Activated B cell treated with CpG ODN at 0.5 μM for 24 hours (primary cell): ENCODE measurements at regions of chr5 and their contacts with region 1.

Region 1: DNA sequence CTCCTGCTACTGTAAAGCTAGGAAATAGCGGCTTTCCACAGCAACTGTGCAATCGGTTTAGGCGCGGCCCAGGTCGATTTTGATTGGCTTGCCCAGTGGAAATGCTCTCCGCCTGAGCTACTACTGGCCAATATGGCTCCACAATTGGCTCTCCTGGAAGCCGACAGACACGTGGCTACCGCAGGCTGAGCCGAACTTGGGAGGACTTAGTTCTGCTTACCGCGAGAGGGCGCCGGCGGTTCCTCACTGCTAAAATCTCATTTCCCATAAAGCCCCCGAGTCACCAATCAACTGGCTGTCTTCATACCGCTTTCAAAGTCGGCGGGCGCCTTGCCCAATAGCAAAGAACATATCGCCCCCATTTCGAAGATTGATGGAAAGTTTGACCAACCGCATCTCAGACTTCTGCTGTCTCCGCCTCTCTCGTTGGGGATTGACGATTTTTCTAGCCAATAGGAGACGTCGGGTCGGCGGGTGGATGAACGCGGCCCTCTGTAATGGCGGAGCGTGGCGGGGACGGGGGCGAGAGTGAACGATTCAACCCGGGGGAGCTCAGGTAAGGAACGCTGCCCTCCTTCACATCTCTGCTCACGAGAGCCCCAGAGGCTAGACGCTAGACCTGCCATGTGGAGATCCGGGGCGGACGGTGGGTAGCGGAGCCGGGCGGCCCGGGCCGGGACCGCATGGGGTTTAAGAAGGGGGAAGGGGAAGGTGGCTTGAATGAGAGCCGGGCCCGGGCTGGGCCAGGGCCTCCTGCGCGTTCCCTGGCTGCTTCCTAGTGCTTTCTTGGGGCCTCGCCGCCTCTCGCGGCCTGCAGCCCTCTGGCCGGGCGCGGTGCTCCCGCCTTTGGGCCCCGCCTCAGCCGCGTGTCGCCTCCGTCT is at the start of gene TCERG1:
- DNase-seq: peak; percentile 89
- ATAC-seq: peak; percentile 89
- H3K4me3 Mint-ChIP-seq: peak within 1 kb of the TSS; percentile 99
- H3K27ac Mint-ChIP-seq: peak within 1 kb of the TSS; percentile 99
- H3K4me1 Mint-ChIP-seq: peaks cover 47% of the 10 kb centered on the region
- H3K27me3 Mint-ChIP-seq: no peaks in the 10 kb centered on the region
- CTCF ChIP-seq: peak; percentile 33
- total RNA-seq, gene TCERG1: 107 and 114 TPM in 2 replicates

Region 2: DNA sequence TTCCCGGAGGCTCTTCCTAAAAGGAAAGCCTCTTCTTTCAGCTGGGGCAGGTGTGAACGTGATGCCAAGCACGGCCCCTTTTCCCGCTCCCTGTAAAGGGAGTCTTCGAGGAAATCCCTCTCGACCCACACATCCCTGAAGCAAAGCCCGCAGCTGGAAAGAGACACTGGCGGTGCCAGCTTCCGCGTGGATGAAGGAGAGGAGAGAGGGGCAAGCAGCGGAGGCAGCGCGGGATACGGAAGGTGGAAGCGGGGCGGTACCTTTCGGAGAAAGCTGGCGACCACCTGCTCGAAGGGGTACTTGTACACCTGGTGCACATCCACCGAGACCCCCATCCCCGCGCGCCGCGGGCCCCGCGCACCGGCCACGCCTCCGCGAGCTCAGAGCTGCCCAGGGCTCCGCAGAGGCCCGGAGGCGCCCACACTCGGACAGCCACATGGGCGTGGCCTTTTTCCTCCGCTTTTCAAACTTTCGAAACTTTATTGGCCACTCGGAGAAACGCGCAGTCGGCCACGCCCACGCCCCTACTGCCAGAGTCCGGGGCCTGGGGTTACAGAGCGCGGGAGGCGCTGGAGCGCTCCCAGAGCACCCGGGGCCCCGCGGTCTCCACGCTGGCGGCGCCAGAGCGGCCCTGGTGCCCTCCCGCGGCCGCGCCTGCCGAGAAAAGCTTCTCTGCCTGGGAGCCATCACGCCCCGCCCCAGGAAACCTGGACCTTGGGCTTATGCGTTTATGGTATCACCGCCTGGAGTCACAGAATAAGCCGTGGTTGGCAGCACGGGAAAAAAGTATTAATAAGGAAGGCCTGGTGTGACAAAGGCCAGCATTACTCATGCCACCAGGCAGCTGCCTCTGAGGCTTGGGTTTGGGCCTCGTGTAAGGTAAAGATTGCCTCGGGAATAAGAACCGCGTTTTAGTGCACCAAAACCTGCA is 611.9 kb before region 1 on chr5 and contains the start of gene PRELID2:
- CTCF ChIA-PET with region 1: no interaction called
- POLR2A ChIA-PET with region 1: no interaction called
- intact Hi-C with region 1: loop called (anchors 10 kb)
- DNase-seq: peak; percentile 55
- ATAC-seq: peak; percentile 90
- H3K4me3 Mint-ChIP-seq: peak within 1 kb of the TSS; percentile 78
- H3K27ac Mint-ChIP-seq: no peak within 1 kb of the TSS
- H3K4me1 Mint-ChIP-seq: peaks cover 14% of the 10 kb centered on the region
- H3K27me3 Mint-ChIP-seq: peaks cover 2% of the 10 kb centered on the region
- CTCF ChIP-seq: no peak
- total RNA-seq, gene PRELID2: 2.6 and 3.3 TPM in 2 replicates

Region 3: DNA sequence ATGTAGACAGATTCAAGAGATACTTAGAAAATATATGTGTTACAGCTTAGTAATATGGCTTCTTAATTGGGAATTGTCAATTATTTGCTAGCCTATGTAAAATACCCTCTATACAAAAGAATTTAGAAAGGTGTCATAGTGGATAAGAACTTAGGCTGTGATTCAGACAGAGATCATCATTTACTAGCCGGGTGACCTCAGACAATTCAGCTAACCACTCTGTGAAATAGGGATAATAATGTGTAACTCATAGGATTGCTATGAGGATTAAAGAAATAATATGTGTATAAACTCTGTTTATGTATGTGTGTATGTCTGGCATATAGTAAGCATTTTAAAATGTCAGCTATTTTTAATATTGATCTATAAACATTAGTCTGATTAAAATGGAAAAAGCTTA is 258.7 kb before region 1 on chr5:
- CTCF ChIA-PET with region 1: no interaction called
- POLR2A ChIA-PET with region 1: interaction called, 11 read pairs
- intact Hi-C with region 1: no loop called
- DNase-seq: no peak
- ATAC-seq: no peak
- H3K4me3 Mint-ChIP-seq: no peak overlapping the region
- H3K27ac Mint-ChIP-seq: no peak overlapping the region
- H3K4me1 Mint-ChIP-seq: no peaks in the 10 kb centered on the region
- H3K27me3 Mint-ChIP-seq: peaks cover 14% of the 10 kb centered on the region
- CTCF ChIP-seq: no peak